ENCODE measurements at regions of chr5 and their contacts with region 1.

Region 1: GRCh38 chr5:17359451-17360011 is 138.5 kb upstream of the TAF11L2 start:
- DNase-seq: no peak
- ATAC-seq: no peak
- H3K4me3 Mint-ChIP-seq: no peak overlapping the region
- H3K27ac Mint-ChIP-seq: no peak overlapping the region
- H3K4me1 Mint-ChIP-seq: peaks cover 18% of the 10 kb centered on the region
- H3K27me3 Mint-ChIP-seq: no peaks in the 10 kb centered on the region
- CTCF ChIP-seq: no peak

Region 2: DNA sequence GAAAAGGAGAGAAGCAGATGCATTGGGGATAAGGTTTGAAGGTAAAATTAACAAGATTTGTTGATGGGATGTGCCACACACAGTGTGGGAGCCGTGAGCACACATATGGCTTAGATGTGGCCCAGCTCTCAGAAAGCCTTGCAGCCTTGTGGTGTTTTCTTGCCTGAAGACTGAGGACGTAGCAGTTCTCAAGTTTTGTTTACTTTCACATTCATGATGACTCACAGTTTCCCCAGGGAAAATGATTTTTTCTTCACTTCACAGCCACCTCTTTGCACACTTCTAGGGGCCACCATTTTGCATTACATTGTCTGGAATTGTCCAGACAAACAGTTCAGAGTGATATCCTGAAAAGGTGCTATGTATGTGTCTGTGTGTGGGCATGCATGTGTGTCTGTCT is 15.9 kb before region 1 on chr5:
- CTCF ChIA-PET with region 1: no interaction called
- POLR2A ChIA-PET with region 1: no interaction called
- intact Hi-C with region 1: no loop called
- DNase-seq: no peak
- ATAC-seq: peak; percentile 91
- H3K4me3 Mint-ChIP-seq: no peak overlapping the region
- H3K27ac Mint-ChIP-seq: peak overlapping the region; percentile 27
- H3K4me1 Mint-ChIP-seq: peaks cover 12% of the 10 kb centered on the region
- H3K27me3 Mint-ChIP-seq: no peaks in the 10 kb centered on the region
- CTCF ChIP-seq: no peak

Region 3: DNA sequence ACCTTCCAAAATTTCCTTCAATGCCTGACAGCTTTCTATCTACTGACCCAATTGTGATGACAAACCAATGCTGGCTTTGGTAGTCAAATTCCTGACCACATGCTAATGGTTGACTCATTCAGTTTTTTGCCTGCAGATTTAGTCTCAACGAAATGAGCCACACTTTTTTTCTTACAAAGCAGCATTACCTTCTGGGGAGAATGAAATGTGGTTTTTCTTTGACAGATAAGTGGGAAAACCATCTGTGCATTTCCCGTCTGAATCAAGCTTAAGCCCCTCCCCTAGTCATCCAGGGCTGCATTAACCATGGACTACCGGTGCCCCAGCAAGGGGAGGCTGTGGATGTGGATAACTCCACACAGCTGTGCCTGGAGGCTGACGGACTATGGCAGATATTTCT is 38.9 kb after region 1 on chr5:
- CTCF ChIA-PET with region 1: no interaction called
- POLR2A ChIA-PET with region 1: interaction called, 3 read pairs
- intact Hi-C with region 1: loop called (anchors 5 kb)
- DNase-seq: no peak
- ATAC-seq: peak; percentile 64
- H3K4me3 Mint-ChIP-seq: peak overlapping the region; percentile 44
- H3K27ac Mint-ChIP-seq: peak overlapping the region; percentile 60
- H3K4me1 Mint-ChIP-seq: peaks cover 45% of the 10 kb centered on the region
- H3K27me3 Mint-ChIP-seq: no peaks in the 10 kb centered on the region
- CTCF ChIP-seq: no peak

Region 4: DNA sequence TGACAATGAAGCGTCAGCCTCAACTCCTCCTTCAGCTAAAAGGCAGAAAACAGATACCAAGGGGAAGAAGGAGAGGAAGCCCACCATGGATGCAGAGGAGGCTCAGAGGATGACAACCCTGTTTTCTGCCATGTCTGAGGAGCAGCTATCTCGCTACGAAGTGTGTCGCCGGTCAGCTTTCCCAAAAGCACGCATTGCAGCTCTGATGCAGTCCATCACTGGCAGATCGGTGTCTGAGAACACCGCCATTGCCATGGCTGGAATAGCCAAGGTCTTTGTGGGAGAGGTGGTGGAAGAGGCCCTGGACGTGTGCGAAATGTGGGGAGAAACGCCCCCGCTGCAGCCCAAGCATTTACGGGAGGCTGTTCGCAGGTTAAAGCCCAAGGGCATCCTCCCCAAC is 245.4 kb after region 1 on chr5:
- CTCF ChIA-PET with region 1: no interaction called
- POLR2A ChIA-PET with region 1: no interaction called
- intact Hi-C with region 1: no loop called
- DNase-seq: no peak
- ATAC-seq: no peak
- H3K4me3 Mint-ChIP-seq: no peak overlapping the region
- H3K27ac Mint-ChIP-seq: no peak overlapping the region
- H3K4me1 Mint-ChIP-seq: no peaks in the 10 kb centered on the region
- H3K27me3 Mint-ChIP-seq: no peaks in the 10 kb centered on the region
- CTCF ChIP-seq: no peak